ENCODE measurements at regions of chr4 and their contacts with region 1.

Region 1: DNA sequence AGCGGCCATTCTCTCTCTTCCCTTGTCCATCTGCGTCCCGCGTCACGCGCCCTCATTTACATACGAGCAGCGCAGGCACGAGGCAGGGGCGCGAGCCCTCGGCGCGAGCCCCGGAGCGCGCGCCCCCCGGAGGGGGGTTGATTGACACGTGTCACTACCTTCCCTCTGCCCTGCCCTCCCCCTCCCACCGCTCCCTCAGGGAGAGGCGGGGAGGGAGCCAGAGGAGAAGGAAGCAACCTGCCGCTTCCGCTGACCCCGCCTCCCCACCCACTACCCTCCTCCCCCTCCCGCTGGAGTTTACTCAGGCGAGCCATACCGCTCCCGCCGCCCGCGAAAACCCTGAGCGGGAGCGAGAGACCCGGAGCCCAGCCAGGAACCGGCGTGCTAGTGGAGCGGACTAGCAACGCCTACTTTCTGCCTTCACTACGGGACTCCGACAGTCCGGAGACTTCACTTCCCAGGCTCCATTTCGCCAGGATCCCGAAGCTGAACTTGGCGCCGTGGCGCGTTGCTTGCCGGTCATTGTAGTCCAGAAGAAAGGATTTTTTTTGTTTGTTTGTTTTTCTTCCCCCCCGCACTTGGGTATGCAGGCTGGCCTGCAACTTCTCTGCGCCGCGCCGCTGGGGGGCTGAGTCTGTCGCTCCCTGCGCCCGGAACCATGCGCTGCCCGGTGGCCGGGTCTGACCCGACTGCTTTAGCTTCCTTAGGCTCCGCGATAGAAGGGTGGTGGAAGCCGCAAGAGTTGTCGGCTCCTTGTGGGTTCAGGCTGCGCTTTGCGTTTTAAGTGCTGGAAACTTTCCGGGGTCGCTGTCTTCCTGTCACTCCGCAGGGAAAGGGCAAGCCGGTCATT is at the start of gene LCORL:
- DNase-seq: peak; percentile 83
- H3K4me3 Mint-ChIP-seq: peak within 1 kb of the TSS; percentile 98
- H3K27ac Mint-ChIP-seq: peak within 1 kb of the TSS; percentile 93
- H3K4me1 Mint-ChIP-seq: peaks cover 26% of the 10 kb centered on the region
- H3K27me3 Mint-ChIP-seq: peaks cover 65% of the 10 kb centered on the region
- total RNA-seq, gene LCORL: 8.7 TPM in 2 replicates

Region 2: GRCh38 chr4:16438986-16439385 is 1583.0 kb before region 1 on chr4:
- intact Hi-C with region 1: no loop called
- DNase-seq: no peak
- H3K4me3 Mint-ChIP-seq: no peak overlapping the region
- H3K27ac Mint-ChIP-seq: no peak overlapping the region
- H3K4me1 Mint-ChIP-seq: no peaks in the 10 kb centered on the region
- H3K27me3 Mint-ChIP-seq: no peaks in the 10 kb centered on the region

Region 3: GRCh38 chr4:17336524-17336961 is 685.4 kb before region 1 on chr4:
- intact Hi-C with region 1: loop called (anchors 10 kb)
- DNase-seq: peak; percentile 77
- H3K4me3 Mint-ChIP-seq: peak overlapping the region; percentile 47
- H3K27ac Mint-ChIP-seq: peak overlapping the region; percentile 87
- H3K4me1 Mint-ChIP-seq: peaks cover 43% of the 10 kb centered on the region
- H3K27me3 Mint-ChIP-seq: peaks cover 6% of the 10 kb centered on the region

Region 4: GRCh38 chr4:17544205-17544604 is 477.7 kb before region 1 on chr4:
- intact Hi-C with region 1: loop called (anchors 10 kb)
- DNase-seq: no peak
- H3K4me3 Mint-ChIP-seq: no peak overlapping the region
- H3K27ac Mint-ChIP-seq: no peak overlapping the region
- H3K4me1 Mint-ChIP-seq: peaks cover 6% of the 10 kb centered on the region
- H3K27me3 Mint-ChIP-seq: peaks cover 10% of the 10 kb centered on the region

Region 5: GRCh38 chr4:17614416-17615299 is 407.3 kb before region 1 on chr4 and contains the start of gene MED28:
- intact Hi-C with region 1: loop called (anchors 1 kb)
- DNase-seq: peak; percentile 93
- H3K4me3 Mint-ChIP-seq: peak within 1 kb of the TSS; percentile 96
- H3K27ac Mint-ChIP-seq: peak within 1 kb of the TSS; percentile 97
- H3K4me1 Mint-ChIP-seq: peaks cover 32% of the 10 kb centered on the region
- H3K27me3 Mint-ChIP-seq: peaks cover 2% of the 10 kb centered on the region
- total RNA-seq, gene MED28: 46.6 and 49.6 TPM in 2 replicates

Region 6: GRCh38 chr4:18057821-18058533 is 36.0 kb after region 1 on chr4:
- intact Hi-C with region 1: loop called (anchors 1 kb)
- DNase-seq: no peak
- H3K4me3 Mint-ChIP-seq: peak overlapping the region; percentile 2
- H3K27ac Mint-ChIP-seq: no peak overlapping the region
- H3K4me1 Mint-ChIP-seq: peaks cover 19% of the 10 kb centered on the region
- H3K27me3 Mint-ChIP-seq: peaks cover 38% of the 10 kb centered on the region

Measured in activated T-helper 1 cell treated with anti-CD3 and anti-CD28 coated beads, Interleukin-12 subunit alpha, Interleukin-12 subunit beta, Interleukin-2, Interleukin-4 antibody, amounts not matched to agents 30 ng/mL and 10 ng/mL and 1 ng/mL, durations not matched to agents 14 hours and 24 hours and 36 hours (primary cell).